Activated T-helper 2 cell treated with anti-CD3 and anti-CD28 coated beads, Interferon-gamma antibody, Interleukin-2, Interleukin-4, amounts not matched to agents 10 μg/mL and 5 μg/mL and 100 μg/mL, durations not matched to agents 14 hours and 24 hours and 36 hours (primary cell): ENCODE measurements at regions of chr5 and their contacts with region 1.

Region 1: DNA sequence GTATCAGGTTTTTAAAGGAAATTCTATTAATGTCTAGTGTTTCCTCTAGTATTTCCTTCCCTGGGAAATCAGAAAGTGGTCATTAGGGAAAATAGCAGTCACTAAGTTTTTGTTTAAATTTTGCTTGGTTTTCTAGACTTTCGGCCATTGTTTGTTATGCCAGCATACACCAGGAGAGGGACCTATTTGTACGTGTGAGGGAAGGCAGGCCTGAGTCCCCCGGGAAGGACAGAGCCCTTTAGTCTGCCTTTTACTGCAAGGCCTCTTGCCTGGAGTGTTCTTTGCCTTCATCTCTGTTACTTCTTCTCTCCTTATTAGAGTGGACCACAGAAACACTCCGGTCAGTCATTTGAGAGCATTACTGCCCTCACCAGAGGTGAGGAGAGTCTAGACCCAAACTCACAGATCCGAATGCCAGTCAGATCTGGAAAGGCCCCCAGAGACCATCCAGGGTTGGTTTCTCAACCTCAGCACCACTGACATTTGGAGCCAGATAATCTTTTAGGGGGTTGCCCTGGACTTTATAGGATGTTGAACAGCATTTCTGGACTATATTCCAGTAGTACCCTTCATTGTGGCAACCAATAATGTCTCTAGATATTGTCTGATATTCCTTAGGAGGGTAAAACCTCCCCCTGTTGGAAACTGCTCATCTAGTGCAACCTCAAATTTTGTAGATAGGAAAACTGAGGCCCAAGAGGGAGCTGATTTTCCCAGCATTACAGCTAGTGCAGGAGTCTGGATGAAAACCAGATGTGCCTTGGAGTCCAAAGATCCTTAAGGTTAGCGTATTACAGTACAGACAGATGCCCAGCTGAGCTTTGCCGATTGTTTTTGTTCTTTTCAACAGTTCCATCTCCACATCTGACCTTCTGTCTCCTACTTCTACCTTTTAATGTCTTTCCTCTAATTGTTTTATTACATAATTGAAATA is 93.0 kb upstream of the NIPAL4 start:
- DNase-seq: no peak
- H3K4me3 Mint-ChIP-seq: no peak overlapping the region
- H3K27ac Mint-ChIP-seq: peak overlapping the region; percentile 54
- H3K4me1 Mint-ChIP-seq: peaks cover 2% of the 10 kb centered on the region
- H3K27me3 Mint-ChIP-seq: no peaks in the 10 kb centered on the region

Region 2: GRCh38 chr5:157328277-157328912 is 38.6 kb before region 1 on chr5:
- intact Hi-C with region 1: loop called (anchors 5 kb)
- DNase-seq: peak; percentile 52
- H3K4me3 Mint-ChIP-seq: no peak overlapping the region
- H3K27ac Mint-ChIP-seq: peak overlapping the region; percentile 14
- H3K4me1 Mint-ChIP-seq: peaks cover 32% of the 10 kb centered on the region
- H3K27me3 Mint-ChIP-seq: no peaks in the 10 kb centered on the region